BJ (cell line): ENCODE measurements at regions of chr3 and their contacts with region 1.

Region 1: DNA sequence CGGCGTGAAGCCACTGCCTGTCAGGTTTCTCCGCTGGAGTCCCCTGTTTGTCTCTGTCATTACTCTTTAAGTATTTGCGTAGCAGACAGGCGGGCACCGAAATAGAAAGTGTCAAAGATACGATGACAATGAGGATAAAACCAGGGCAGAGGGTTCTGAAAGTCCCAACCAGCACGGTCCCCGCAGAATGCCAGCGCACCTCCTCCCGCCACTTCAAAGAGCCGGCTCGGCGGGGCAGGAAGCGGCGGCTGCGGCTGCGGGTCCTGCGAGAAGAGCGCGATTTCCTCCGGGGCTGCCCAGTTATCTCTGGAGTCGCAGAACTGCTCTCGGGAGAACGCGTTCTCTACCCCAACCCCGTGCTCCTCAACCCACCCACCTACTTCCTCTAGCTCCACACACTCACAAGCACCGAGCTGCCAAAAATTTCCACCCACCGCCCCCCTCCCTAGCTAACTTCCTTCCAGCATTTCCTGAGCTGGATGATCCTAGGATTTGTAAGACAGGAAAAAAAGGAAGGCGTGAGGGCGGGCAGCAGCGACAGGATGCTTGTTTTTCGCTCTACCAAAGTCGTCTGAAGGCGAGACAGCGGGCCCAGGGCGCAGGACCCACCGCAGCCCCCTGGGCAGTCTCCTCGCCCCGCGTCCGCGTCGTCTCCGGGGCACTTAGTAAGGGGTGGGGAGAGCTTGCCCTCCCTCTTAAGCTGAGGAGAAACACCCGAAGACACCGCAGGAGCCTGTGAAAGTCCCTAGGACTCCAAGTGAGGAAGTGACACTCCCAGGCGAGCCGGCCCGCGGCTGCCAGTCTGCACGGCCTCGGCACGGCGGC is at the start of gene ARHGAP31:
- DNase-seq: no peak
- H3K4me3 ChIP-seq: peak within 1 kb of the TSS; percentile 64
- H3K27me3 ChIP-seq: no peaks in the 10 kb centered on the region
- CTCF ChIP-seq: no peak
- polyA plus RNA-seq, gene ARHGAP31: 18.9 and 19.4 TPM in 2 replicates

Region 2: DNA sequence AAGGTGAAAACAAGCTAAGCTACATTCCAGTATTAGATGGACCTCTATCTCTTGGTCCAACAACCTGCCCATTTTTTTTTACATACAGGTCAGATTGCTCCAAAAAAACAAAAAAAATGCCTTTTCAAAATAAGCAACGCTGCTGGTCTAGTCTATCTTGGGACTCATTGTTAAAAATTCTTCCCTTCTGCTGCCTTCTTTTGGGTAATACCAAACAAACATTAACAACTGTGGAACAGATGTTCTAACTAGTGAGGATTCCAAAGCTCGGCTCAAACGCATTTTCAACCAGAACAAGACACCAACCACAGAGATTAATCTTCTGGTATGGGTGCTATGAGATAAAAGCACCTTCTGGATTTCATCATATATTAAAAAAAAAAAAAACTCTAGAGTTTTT is 24.8 kb after region 1 on chr3:
- CTCF ChIA-PET with region 1: interaction called, 6 read pairs
- POLR2A ChIA-PET with region 1: interaction called, 21 read pairs
- DNase-seq: no peak
- H3K4me3 ChIP-seq: no peak overlapping the region
- H3K27me3 ChIP-seq: no peaks in the 10 kb centered on the region
- CTCF ChIP-seq: no peak

Region 3: DNA sequence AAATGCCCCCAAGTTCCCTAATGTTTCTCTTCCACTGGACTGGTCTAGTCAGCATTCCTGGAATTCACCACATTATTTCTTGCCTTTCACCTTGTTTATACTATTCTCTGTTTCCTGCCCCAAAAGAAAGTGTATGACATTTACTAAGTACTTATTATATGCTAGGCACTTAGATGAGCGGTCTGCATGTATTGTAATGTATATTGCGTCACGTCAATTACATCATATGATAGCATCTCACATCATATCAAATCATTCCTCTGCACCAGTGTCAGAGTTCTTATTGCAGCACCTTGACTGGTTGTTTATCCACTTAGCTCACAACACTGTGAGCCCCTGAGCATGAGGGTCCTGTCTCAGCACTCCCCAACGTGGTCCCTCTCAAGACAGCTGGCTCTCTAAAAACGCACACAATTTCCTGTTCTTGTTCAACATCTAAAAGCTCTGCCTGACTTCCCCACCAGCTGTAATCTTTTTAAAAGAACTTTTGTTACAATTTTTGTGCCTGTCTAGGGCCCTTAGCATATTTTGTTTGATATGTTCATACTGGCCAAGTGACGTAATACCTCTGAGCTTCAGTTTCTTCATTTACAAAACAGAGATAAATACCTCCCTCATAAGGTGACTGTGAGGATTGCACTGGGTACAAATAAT is 58.9 kb after region 1 on chr3:
- CTCF ChIA-PET with region 1: interaction called, 20 read pairs
- POLR2A ChIA-PET with region 1: interaction called, 3 read pairs
- DNase-seq: no peak
- H3K4me3 ChIP-seq: no peak overlapping the region
- H3K27me3 ChIP-seq: no peaks in the 10 kb centered on the region
- CTCF ChIP-seq: peak; percentile 43

Region 4: DNA sequence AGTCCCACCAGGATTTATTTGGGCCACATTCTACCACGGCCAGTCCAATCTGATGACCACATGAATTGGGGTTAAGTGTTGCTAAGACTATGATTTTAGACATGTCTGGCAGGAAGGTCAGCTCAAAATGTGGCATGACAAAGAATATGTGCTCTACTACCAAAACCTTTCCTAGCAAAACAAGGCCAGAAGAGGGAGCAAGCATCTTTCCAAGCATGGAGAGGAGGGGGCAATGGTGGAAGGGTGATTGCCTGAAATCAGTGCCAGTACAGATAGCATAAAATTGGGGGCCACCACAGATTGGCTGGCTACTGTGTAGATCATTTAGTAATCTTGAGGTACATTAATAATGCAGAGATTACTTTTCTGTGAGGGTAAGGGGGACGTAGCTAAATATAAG is 126.1 kb after region 1 on chr3:
- CTCF ChIA-PET with region 1: no interaction called
- POLR2A ChIA-PET with region 1: interaction called, 14 read pairs
- DNase-seq: no peak
- H3K4me3 ChIP-seq: no peak overlapping the region
- H3K27me3 ChIP-seq: no peaks in the 10 kb centered on the region
- CTCF ChIP-seq: no peak

Region 5: DNA sequence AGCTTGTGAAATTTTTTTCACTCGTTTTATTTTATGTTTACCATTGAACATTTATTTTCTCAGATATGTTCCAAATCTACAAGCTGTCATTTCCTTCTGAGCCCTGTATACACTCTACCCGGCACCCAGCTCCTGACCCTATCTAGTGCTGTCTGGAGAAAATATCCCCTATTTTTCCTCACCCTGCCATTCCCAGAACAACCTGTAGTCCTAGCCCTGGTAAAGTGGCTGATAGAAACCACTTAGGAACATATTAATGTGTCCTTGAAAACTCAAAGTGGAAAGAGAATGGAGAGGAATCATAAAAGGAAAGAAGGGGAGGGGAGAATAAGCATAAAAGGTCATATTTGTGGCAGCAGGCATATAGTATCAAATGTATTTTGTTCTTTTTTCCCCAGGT is 196.1 kb after region 1 on chr3:
- CTCF ChIA-PET with region 1: no interaction called
- POLR2A ChIA-PET with region 1: no interaction called
- DNase-seq: no peak
- H3K4me3 ChIP-seq: no peak overlapping the region
- H3K27me3 ChIP-seq: no peaks in the 10 kb centered on the region
- CTCF ChIP-seq: no peak